ENCODE measurements at regions of chr1 and their contacts with region 1.

Region 1: DNA sequence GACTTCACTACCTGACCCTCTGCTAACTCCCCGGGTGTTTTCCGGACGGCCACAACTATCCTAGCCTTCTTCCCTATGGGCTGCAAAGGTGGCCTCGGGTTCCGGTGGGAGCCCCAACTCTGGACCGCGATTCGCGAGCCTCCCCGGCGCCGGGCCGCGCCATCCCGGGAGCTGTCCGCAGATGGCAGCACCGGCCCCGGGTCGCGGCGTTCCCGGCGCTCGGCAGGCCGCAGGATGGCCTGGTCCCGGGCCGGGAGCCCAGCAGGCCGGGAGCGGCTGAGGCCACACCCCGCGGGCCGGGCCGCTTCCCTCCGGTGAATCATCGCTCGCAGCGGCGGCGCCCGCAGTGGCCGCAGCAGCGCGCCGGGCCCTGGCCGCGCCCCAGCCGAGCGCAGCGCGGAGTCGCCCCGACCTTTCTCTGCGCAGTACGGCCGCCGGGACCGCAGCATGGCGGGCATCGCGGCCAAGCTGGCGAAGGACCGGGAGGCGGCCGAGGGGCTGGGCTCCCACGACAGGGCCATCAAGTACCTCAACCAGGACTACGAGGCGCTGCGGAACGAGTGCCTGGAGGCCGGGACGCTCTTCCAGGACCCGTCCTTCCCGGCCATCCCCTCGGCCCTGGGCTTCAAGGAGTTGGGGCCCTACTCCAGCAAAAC is at the start of gene CAPN2:
- DNase-seq: peak; percentile 88
- H3K4me3 ChIP-seq: peak within 1 kb of the TSS; percentile 87 to 95 (median 88)
- H3K27ac ChIP-seq: peak within 1 kb of the TSS; percentile 87
- H3K4me1 ChIP-seq: peaks cover 64% of the 10 kb centered on the region
- H3K27me3 ChIP-seq: no peaks in the 10 kb centered on the region
- CTCF ChIP-seq: peak; percentile 31 to 67
- total RNA-seq, gene CAPN2: 270 to 454 TPM

Region 2: DNA sequence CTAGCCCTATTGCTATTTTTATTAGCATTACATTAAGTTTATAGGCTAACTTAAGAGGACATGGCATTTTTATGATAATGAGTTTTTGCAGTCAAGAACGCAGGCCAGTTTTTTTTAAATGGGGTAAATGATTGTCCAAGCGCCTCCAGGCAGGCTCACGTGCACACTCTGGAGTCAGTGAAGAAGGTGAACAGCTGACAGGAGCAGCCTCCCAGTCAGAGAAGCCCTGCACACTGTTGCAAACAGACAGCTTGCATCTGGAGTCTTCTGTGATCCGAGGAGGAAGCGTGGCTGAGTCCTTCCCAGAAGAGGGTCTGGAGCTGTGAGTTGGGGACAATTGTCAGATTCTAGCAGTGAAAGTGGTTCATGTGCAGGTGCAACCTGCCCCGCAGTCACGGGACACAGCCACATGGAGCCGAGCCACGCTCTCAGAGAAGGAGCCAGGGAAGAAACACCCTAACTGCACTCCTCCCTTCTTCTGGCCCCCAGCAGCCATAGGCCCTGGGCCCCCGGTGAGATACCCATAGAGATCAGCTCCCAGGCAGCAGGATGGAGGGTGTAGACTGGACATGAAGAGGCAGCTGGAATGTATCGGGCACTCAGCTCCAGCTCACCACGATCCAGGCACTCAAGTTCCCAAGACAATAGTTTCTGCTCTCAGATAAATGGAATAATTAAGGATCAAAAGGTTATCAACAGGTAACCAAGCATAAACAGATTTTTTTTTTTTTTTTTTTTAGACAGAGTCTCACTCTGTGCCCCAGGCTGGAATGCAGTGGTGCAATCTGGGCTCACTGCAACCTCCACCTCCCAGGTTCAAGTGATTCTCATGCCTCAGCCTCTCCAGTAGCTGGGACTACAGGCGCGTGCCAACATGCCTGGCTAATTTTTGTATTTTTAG is 26.4 kb after region 1 on chr1:
- CTCF ChIA-PET with region 1: interaction called, 9 read pairs
- dilution Hi-C with region 1: no loop called
- in situ Hi-C with region 1: no loop called
- intact Hi-C with region 1: loop called (anchors 1 kb)
- DNase-seq: peak; percentile 33
- H3K4me3 ChIP-seq: no peak overlapping the region
- H3K27ac ChIP-seq: no peak overlapping the region
- H3K4me1 ChIP-seq: peaks cover 37% of the 10 kb centered on the region
- H3K27me3 ChIP-seq: no peaks in the 10 kb centered on the region
- CTCF ChIP-seq: no peak

Region 3: DNA sequence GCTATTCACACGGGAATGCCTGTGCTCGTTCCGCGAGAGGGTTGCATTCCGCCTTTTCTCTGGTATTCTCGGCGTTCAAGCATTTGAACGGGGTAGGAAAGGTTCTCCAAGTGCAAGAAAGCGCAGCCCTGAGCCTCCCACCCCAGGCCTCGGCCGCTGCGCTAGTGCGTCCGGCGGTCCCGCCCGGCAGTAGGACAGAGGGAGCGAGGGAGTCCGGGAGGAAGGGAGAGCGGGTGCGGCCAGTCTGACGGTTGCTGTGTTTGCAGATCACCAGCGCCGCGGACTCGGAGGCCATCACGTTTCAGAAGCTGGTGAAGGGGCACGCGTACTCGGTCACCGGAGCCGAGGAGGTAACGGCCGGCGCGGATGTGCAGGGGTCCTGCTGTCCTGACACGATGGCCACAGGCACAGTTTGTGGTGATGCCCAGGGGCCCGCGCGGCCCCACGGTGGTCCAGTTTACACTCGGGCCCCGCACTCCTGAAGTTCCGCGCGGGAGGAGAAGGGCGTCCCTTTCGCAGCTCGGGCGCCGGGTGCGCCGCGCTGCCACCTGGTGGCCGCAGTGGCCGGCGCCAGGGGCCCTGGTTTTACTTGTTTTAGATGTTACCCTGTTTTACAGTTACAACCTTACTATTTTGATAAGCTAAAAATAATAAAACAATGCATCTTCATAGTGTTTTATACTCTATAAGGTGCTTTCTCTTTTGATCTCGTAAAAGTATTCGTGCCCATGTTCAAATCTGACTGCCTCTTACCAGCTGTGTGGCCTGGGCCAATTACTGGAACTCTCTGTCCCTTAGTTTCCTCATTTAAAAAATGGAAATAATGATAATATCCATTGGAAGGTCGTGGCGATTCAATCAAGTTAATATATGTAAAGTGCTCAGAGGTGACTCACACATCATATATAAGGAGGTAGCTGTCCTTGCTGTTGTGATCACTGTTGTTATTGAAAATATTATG is 36.7 kb after region 1 on chr1:
- CTCF ChIA-PET with region 1: no interaction called
- dilution Hi-C with region 1: no loop called
- in situ Hi-C with region 1: no loop called
- intact Hi-C with region 1: loop called (anchors 1 kb)
- DNase-seq: no peak
- H3K4me3 ChIP-seq: no peak overlapping the region
- H3K27ac ChIP-seq: no peak overlapping the region
- H3K4me1 ChIP-seq: no peaks in the 10 kb centered on the region
- H3K27me3 ChIP-seq: no peaks in the 10 kb centered on the region
- CTCF ChIP-seq: peak; percentile 57 to 81

Region 4: DNA sequence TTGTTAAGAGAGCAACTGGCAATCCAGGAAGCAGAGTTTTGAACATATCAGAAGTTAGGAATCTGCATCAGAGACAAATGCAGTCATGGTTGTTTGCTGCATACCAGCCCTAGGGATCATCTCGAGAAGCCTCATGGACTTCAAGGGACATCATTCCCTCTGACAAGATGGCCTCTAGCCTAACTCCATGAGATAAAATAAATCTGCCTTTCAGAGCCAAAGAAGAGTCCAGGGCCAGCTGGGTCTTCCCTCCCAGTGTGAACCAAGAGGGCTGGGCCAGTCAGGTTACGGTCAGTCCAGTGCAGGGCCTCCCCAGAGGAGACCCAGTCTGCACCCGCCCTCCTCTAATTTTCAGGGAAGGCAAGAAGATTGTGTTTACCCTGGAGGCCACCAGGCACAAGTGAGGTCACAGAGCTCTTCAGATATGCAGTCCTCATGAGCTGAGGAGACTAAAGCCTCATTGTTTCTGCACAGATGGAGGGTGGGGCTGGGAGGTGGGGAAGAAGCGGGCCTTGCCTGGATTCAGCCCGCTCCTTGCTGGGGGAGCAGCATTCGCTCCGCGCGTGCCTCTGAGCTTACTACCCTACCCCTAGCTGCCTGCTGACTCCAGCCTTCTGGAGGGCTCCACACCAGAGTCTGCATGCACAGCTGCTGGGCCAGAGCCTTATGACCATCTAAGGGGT is 52.9 kb after region 1 on chr1:
- CTCF ChIA-PET with region 1: no interaction called
- dilution Hi-C with region 1: no loop called
- in situ Hi-C with region 1: no loop called
- intact Hi-C with region 1: no loop called
- DNase-seq: no peak
- H3K4me3 ChIP-seq: no peak overlapping the region
- H3K27ac ChIP-seq: no peak overlapping the region
- H3K4me1 ChIP-seq: no peaks in the 10 kb centered on the region
- H3K27me3 ChIP-seq: no peaks in the 10 kb centered on the region
- CTCF ChIP-seq: no peak

Region 5: DNA sequence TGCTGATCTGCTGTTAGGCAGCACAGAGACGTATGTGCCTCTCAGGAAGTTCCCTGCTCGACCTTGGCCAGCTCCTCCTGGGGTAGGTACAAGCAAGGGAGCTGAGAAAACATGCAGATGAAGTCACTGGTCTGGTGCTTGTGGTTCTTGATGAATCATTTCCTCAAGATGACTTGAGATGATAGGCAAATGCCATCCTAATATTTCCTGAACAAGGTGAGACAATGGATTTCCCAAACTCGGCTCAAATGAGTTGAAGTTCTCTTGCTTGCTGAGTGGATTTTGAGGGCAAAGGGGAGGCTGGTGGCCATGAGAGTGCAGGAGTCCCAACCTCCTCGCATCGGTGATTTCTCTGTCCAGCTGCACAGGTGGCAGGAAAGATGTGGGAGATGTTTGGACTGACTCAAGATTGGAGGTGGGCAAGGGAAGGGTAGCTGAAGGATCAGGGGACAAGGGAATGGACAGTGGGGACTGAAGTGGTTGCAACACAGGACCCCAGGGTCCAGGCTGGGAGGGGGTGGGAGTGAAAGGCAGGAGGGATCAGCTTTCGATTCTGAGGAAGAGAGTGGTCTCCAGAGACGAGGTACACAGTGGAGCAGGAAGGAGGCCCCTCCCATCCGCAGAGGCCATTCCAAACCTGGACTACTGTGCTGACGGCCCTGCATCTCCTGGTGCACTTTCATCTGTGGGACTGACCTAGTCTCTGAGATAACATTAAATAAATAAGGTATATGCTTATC is 63.9 kb after region 1 on chr1:
- CTCF ChIA-PET with region 1: no interaction called
- dilution Hi-C with region 1: loop called (anchors 5 kb)
- in situ Hi-C with region 1: no loop called
- intact Hi-C with region 1: loop called (anchors 2 kb)
- DNase-seq: peak; percentile 94
- H3K4me3 ChIP-seq: no peak overlapping the region
- H3K27ac ChIP-seq: peak overlapping the region; percentile 40
- H3K4me1 ChIP-seq: peaks cover 40% of the 10 kb centered on the region
- H3K27me3 ChIP-seq: no peaks in the 10 kb centered on the region
- CTCF ChIP-seq: no peak

Region 6: GRCh38 chr1:224497714-224498573 is 785.6 kb after region 1 on chr1:
- CTCF ChIA-PET with region 1: no interaction called
- dilution Hi-C with region 1: no loop called
- in situ Hi-C with region 1: no loop called
- intact Hi-C with region 1: loop called (anchors 10 kb)
- DNase-seq: peak; percentile 90
- H3K4me3 ChIP-seq: peak overlapping the region in 2 of 3 experiments; percentile 40 to 42
- H3K27ac ChIP-seq: peak overlapping the region; percentile 99
- H3K4me1 ChIP-seq: peaks cover 38% of the 10 kb centered on the region
- H3K27me3 ChIP-seq: no peaks in the 10 kb centered on the region
- CTCF ChIP-seq: no peak

Measured in mammary epithelial cell (primary cell).